ENCODE measurements at regions of chr14 and their contacts with region 1.

Region 1: GRCh38 chr14:75132382-75133086 is 5.7 kb upstream of the NEK9 start:
- DNase-seq: peak; percentile 32 to 35
- ATAC-seq: peak; percentile 81 to 88
- H3K4me3 ChIP-seq: no peak overlapping the region
- H3K27ac ChIP-seq: peak overlapping the region; percentile 58 to 70 (median 64)
- H3K4me1 ChIP-seq: peaks cover 12 to 14% of the 10 kb centered on the region in 2 donors
- H3K27me3 ChIP-seq: no peaks in the 10 kb centered on the region
- CTCF ChIP-seq: peak; percentile 64 to 86 (median 81)
- POLR2A ChIP-seq: no peak

Region 2: DNA sequence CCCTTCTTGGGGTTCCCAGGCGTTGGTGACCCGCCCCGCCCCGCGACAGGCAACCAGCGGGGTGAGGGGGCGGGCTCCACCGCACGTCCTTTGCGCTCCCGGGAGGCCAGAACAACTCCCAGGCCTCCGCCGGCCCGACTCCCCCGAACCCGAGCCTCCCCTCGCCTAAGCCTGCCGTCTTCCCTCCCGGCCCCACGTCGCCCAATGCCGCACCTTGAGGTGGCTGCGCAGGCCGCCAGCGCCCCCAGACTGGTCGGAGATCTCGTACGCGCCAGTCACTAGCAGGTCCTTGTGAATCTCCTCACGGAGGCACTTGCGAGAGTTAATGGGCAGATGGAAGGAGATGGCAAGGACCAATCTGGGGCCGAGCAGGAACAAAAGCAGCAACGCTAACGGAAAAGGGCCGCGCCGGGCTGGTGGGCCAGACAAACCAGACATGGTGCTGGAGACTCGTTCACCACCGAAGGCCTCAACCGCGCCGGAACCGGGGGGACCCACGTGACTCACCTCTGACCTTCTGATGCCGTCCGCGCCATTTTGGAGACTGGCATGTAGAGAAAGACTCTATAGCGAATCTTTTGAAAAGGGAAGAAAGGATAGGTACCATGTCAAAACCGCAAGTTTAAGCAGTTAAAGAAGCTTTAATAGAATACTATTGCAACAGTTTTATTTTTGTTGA is 43.7 kb after region 1 on chr14 and contains the start of gene TMED10:
- in situ Hi-C with region 1: no loop called
- intact Hi-C with region 1: loop called (anchors 2 kb)
- DNase-seq: peak; percentile 86 to 87
- ATAC-seq: peak; percentile 93
- H3K4me3 ChIP-seq: peak within 1 kb of the TSS; percentile 78 to 97 (median 92)
- H3K27ac ChIP-seq: peak within 1 kb of the TSS; percentile 98 to 100 (median 98)
- H3K4me1 ChIP-seq: peaks cover 33 to 35% of the 10 kb centered on the region in 2 donors
- H3K27me3 ChIP-seq: no peaks in the 10 kb centered on the region
- CTCF ChIP-seq: peak in 2 of 5 experiments; percentile 12 to 15
- POLR2A ChIP-seq: peak; percentile 84 to 88
- total RNA-seq, gene TMED10: 161 to 362 (median 255) TPM

Region 3: DNA sequence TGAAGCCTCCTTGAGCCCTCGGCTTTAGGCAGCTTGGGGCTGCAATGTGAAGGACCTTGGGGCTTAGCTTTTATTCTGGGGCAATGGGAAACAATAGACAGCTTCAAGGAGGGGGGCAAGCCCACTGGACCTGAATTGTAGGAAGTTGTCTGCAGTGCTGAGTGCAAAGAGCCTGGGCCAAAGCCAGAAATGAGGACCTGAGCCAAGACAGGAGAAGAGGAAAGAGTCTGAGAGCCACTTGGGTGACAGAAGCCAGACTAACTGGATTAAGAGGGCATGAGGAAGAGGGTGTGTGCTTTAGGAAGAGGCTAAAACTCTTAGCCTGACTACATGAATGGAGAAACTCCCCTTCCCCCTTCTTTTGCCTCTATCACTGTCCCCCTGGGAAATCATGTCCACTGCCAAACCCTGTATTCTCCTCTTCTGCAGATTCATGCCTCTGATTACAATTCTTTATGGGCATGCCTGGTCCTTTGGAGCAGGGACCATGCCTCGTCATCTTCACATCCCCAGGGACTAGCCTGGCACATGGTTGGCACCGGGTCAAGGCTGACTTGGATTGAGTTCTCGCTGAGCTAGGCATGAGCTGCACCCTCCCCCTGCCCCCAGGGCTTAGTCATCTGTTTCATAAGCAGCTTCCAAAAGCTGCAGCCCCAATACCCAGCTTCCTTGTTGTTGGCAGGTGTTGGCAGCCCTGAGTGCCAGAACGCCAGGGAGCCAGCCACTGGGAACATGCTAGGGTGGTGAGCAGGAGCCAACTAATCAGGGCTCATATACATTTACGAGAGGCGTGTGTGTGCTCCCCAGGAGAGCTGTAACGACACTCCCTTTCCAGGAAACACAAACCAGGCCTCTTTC is 267.5 kb after region 1 on chr14:
- in situ Hi-C with region 1: no loop called
- intact Hi-C with region 1: loop called (anchors 10 kb)
- DNase-seq: peak; percentile 94 to 98
- ATAC-seq: peak; percentile 90 to 93
- H3K4me3 ChIP-seq: no peak overlapping the region
- H3K27ac ChIP-seq: peak overlapping the region; percentile 82 to 89 (median 84)
- H3K4me1 ChIP-seq: peaks cover 25 to 29% of the 10 kb centered on the region in 2 donors
- H3K27me3 ChIP-seq: no peaks in the 10 kb centered on the region
- CTCF ChIP-seq: no peak
- POLR2A ChIP-seq: no peak

Region 4: GRCh38 chr14:75487155-75487671 is 354.7 kb after region 1 on chr14:
- in situ Hi-C with region 1: loop called in 3 of 4 experiments (anchors 10 to 25 kb)
- intact Hi-C with region 1: loop called (anchors 5 kb)
- DNase-seq: no peak
- ATAC-seq: no peak
- H3K4me3 ChIP-seq: no peak overlapping the region
- H3K27ac ChIP-seq: no peak overlapping the region
- H3K4me1 ChIP-seq: peaks cover 0 to 6% of the 10 kb centered on the region in 2 donors
- H3K27me3 ChIP-seq: no peaks in the 10 kb centered on the region
- CTCF ChIP-seq: no peak
- POLR2A ChIP-seq: no peak

Measured in gastrocnemius medialis (tissue), 4 donors.